Esophagus squamous epithelium (tissue), 5 donors: ENCODE measurements at regions of chr7 and their contacts with region 1.

Region 1: DNA sequence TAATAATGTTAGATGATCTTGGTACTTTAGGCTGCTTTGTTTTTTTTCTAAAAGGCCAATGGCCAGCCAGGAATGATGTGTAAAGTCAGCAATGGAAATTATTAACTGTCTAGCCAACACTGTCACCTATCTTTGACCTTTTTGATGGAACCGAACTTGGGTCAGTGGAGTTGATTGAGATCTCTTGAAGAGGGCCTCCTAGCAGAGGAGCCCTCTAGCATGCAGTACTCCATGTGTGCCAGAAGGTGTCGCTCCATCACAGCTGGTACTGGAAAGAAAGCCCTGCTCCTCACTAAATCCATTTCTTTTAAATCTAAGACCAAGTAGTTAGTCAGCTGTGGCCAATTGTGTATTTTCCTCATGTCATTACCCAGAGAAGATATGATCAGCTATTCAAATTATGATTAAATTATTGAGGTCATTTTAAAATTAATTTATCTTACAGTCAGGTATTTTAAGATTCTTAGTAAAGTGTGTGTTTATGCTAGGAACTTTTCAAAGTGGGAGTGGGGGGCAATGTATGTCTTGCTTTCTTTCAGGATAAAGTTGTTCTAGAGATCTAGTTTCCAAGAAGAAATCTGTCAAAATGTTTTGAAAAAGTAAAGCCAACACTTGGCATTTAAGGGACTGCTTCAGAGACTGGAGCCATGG is 33.1 kb upstream of the CROT start:
- DNase-seq: no peak
- H3K4me3 ChIP-seq: no peak overlapping the region
- H3K27ac ChIP-seq: no peak overlapping the region
- H3K4me1 ChIP-seq: peaks cover 0 to 25% (median 9%) of the 10 kb centered on the region in 3 donors
- H3K27me3 ChIP-seq: no peaks in the 10 kb centered on the region
- CTCF ChIP-seq: peak; percentile 95 to 99 (median 96)
- POLR2A ChIP-seq: no peak

Region 2: GRCh38 chr7:87152107-87152844 is 160.1 kb before region 1 on chr7 and contains the start of gene DMTF1:
- intact Hi-C with region 1: no loop called
- DNase-seq: peak; percentile 65
- H3K4me3 ChIP-seq: peak within 1 kb of the TSS; percentile 59 to 94 (median 85)
- H3K27ac ChIP-seq: peak within 1 kb of the TSS; percentile 98 to 99 (median 98)
- H3K4me1 ChIP-seq: peaks cover 15 to 49% (median 32%) of the 10 kb centered on the region in 3 donors
- H3K27me3 ChIP-seq: no peaks in the 10 kb centered on the region
- CTCF ChIP-seq: peak in 2 of 6 experiments; percentile 19 to 22
- POLR2A ChIP-seq: peak in 3 of 4 donors; percentile 15 to 89 (median 86)
- total RNA-seq, gene DMTF1: 16.5 to 75.2 (median 34.5) TPM

Region 3: DNA sequence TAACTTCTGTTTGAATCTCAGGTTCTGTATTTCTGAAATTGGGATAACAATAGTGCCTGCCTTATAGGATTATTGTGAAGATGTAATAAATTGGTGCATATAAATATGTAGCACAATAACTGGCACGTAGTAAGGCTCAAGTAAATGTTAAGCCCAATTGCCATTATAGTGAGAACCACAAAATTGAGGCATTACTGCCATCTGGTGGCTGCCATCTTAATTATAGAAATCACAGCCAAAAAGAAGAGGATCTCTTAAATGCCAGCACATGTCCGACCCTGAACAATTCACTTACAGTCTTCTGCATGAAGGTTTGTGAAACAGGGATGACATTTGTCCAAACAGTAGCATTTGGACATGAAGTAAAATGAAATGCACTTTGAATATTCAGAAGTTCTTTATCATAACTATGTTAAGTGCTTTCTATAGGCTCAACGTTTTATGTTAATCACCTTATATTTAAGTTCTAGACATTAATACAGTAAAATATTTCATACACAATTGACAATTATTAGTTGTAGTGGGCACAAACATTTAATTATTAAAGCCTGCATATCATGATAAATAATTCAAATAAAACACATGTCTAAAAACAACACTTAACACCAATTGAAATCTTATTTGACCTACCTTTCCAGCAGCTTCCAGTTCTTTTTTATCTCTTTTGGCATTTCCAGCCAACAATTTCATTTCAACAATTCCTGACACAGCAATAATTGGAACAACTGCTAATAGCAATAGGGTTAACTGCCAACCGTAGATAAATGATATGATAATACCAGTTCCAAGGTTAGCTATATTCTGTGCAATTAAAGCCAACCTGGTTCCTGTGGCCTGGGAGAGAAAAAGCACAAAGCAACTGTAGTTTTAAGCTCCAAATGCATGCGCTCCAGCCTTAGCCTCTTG is 104.6 kb after region 1 on chr7:
- intact Hi-C with region 1: loop called (anchors 2 kb)
- DNase-seq: no peak
- H3K4me3 ChIP-seq: no peak overlapping the region
- H3K27ac ChIP-seq: no peak overlapping the region
- H3K4me1 ChIP-seq: peaks cover 0 to 32% (median 6%) of the 10 kb centered on the region in 3 donors
- H3K27me3 ChIP-seq: no peaks in the 10 kb centered on the region
- CTCF ChIP-seq: peak; percentile 38 to 79 (median 67)
- POLR2A ChIP-seq: no peak